ENCODE measurements at regions of chr4 and their contacts with region 1.

Region 1: GRCh38 chr4:88211473-88212252 is 53.2 kb upstream of the ABCG2 start:
- DNase-seq: peak; percentile 66
- H3K4me3 Mint-ChIP-seq: no peak overlapping the region
- H3K27ac Mint-ChIP-seq: no peak overlapping the region
- H3K4me1 Mint-ChIP-seq: no peaks in the 10 kb centered on the region
- H3K27me3 Mint-ChIP-seq: no peaks in the 10 kb centered on the region

Region 2: GRCh38 chr4:87679449-87680169 is 532.1 kb before region 1 on chr4:
- CTCF ChIA-PET with region 1: interaction called, 6 read pairs
- intact Hi-C with region 1: loop called (anchors 2 kb)
- DNase-seq: peak; percentile 37
- H3K4me3 Mint-ChIP-seq: no peak overlapping the region
- H3K27ac Mint-ChIP-seq: no peak overlapping the region
- H3K4me1 Mint-ChIP-seq: no peaks in the 10 kb centered on the region
- H3K27me3 Mint-ChIP-seq: peaks cover 1% of the 10 kb centered on the region

Region 3: GRCh38 chr4:87973283-87974169 is 238.1 kb before region 1 on chr4:
- CTCF ChIA-PET with region 1: interaction called, 5 read pairs
- intact Hi-C with region 1: loop called (anchors 2 kb)
- DNase-seq: peak; percentile 58
- H3K4me3 Mint-ChIP-seq: no peak overlapping the region
- H3K27ac Mint-ChIP-seq: no peak overlapping the region
- H3K4me1 Mint-ChIP-seq: peaks cover 5% of the 10 kb centered on the region
- H3K27me3 Mint-ChIP-seq: peaks cover 33% of the 10 kb centered on the region

Region 4: DNA sequence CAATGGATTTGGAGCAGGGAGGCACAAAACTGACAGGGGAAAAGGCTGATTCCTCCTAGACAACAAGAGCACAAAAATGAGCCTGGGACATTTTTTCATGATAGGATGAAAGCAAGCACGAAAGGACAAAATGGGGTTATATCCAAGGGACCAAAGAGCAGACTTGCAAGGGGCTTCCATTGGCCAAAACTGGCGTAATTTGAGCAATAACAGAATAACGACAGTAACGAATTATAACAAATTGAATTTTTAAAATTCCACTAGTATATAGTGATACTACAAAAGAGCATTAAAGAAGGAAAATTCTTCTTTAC is 225.8 kb before region 1 on chr4:
- CTCF ChIA-PET with region 1: no interaction called
- intact Hi-C with region 1: no loop called
- DNase-seq: no peak
- H3K4me3 Mint-ChIP-seq: no peak overlapping the region
- H3K27ac Mint-ChIP-seq: no peak overlapping the region
- H3K4me1 Mint-ChIP-seq: no peaks in the 10 kb centered on the region
- H3K27me3 Mint-ChIP-seq: peaks cover 9% of the 10 kb centered on the region

Region 5: DNA sequence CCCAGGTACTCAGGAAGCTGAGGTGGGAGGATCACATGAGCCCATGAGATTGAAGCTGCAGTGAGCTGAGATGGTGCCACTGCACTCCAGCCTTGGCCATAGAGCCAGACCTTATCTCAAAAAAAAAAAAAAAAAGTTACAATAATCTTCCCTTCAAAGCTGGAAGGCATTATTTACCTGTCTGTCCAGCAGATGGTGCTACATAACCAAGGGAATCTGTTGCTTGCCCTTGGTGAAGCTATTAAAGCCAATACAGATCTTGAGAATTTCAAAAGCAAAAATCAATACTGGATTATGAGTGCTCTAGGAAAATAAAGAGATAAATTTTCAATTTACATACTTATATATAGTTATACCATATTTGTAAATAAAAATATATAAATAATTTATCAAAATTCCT is 178.4 kb before region 1 on chr4:
- CTCF ChIA-PET with region 1: interaction called, 92 read pairs
- intact Hi-C with region 1: loop called (anchors 1 kb)
- DNase-seq: peak; percentile 54
- H3K4me3 Mint-ChIP-seq: no peak overlapping the region
- H3K27ac Mint-ChIP-seq: no peak overlapping the region
- H3K4me1 Mint-ChIP-seq: no peaks in the 10 kb centered on the region
- H3K27me3 Mint-ChIP-seq: no peaks in the 10 kb centered on the region

Region 6: GRCh38 chr4:88054901-88055300 is 156.8 kb before region 1 on chr4:
- CTCF ChIA-PET with region 1: interaction called, 6 read pairs
- intact Hi-C with region 1: loop called (anchors 1 kb)
- DNase-seq: peak; percentile 16
- H3K4me3 Mint-ChIP-seq: no peak overlapping the region
- H3K27ac Mint-ChIP-seq: no peak overlapping the region
- H3K4me1 Mint-ChIP-seq: no peaks in the 10 kb centered on the region
- H3K27me3 Mint-ChIP-seq: no peaks in the 10 kb centered on the region

Region 7: DNA sequence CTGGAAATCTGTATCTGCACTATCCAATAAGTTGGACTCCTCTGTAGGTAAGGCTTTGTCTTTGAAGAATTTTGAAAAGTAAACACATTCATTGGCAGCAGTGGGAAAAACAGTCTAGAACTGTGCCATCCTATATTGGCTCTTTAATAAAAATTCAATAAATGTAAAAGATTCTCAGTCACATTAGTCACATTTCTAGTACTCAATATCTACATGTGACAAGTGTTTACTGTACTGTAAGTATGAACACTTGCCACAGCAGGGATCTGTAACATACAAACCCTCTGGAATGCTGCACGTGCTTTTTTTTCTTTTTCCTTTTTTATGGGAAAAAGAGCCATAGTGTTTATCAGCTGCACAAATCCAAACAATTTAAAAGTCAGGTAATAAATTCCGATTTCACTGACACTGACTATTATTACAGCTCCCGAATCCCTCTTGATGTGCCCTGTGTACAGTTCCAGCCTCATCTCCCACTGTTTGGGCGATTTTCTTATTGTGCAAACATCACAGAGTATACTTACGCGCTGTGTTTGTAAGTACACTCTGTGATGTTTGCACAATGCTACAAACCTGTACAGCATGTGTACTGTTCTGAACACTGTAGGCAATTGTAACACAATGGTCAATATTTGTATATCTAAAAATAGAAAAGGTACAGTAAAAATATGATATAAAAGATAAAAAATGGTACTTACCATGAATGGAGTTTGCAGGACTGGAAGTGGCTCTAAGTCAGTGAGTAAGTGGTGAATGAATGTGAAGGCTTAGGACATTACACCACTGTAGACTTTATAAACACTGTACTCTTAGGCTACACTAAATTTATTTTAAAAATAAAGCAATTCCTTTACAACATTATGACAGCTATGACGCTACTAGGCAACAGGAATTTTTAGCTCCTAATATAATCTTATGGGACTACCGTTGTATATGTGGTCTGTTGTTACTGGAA is 303.2 kb after region 1 on chr4:
- CTCF ChIA-PET with region 1: interaction called, 17 read pairs
- intact Hi-C with region 1: no loop called
- DNase-seq: no peak
- H3K4me3 Mint-ChIP-seq: no peak overlapping the region
- H3K27ac Mint-ChIP-seq: no peak overlapping the region
- H3K4me1 Mint-ChIP-seq: no peaks in the 10 kb centered on the region
- H3K27me3 Mint-ChIP-seq: no peaks in the 10 kb centered on the region

Region 8: GRCh38 chr4:88659055-88659889 is 447.6 kb after region 1 on chr4:
- CTCF ChIA-PET with region 1: no interaction called
- intact Hi-C with region 1: loop called (anchors 10 kb)
- DNase-seq: peak; percentile 69
- H3K4me3 Mint-ChIP-seq: no peak overlapping the region
- H3K27ac Mint-ChIP-seq: no peak overlapping the region
- H3K4me1 Mint-ChIP-seq: peaks cover 6% of the 10 kb centered on the region
- H3K27me3 Mint-ChIP-seq: no peaks in the 10 kb centered on the region

Measured in activated naive CD4-positive, alpha-beta T cell treated with anti-CD3 and anti-CD28 coated beads for 36 hours (primary cell).